Endothelial cell of umbilical vein (primary cell): ENCODE measurements at regions of chr4 and their contacts with region 1.

Region 1: DNA sequence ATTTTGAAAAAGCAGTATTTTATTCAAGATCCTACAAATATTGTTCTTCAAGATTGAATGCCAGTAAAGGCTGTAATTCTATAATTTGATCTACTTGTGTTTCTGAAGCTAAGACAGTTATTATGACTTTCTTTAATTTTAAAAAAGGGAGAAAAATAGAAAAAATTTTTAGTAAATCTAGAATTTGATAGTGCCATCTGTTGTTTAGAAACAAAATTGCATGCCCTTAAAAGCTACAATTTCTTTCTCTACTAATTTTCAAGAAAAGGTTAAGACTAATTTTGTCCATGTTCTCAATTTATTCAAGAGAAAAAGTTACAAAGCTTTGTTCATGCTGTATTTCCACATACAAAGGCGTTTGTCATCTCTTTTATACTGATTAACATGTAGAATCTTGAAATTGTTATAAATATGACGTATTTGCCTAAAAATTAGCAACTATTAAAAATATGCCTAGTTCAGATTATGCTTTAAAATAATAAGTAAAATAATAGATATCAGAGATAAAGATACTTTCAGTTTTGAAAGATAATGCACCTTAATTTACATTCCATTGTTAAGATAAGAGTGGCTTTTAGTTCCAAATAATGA is 25.6 kb upstream of the MMRN1 start:
- DNase-seq: peak; percentile 31
- H3K4me3 ChIP-seq: no peak overlapping the region
- H3K27ac ChIP-seq: no peak overlapping the region
- H3K4me1 ChIP-seq: no peaks in the 10 kb centered on the region
- H3K27me3 ChIP-seq: no peaks in the 10 kb centered on the region
- CTCF ChIP-seq: peak in 1 of 2 donors; percentile 30
- POLR2A ChIP-seq: no peak

Region 2: GRCh38 chr4:89586864-89587263 is 282.2 kb before region 1 on chr4:
- CTCF ChIA-PET with region 1: interaction called, 14 read pairs
- POLR2A ChIA-PET with region 1: no interaction called
- dilution Hi-C with region 1: no loop called
- intact Hi-C with region 1: no loop called
- DNase-seq: peak; percentile 45
- H3K4me3 ChIP-seq: no peak overlapping the region
- H3K27ac ChIP-seq: no peak overlapping the region
- H3K4me1 ChIP-seq: no peaks in the 10 kb centered on the region
- H3K27me3 ChIP-seq: no peaks in the 10 kb centered on the region
- CTCF ChIP-seq: no peak
- POLR2A ChIP-seq: no peak

Region 3: DNA sequence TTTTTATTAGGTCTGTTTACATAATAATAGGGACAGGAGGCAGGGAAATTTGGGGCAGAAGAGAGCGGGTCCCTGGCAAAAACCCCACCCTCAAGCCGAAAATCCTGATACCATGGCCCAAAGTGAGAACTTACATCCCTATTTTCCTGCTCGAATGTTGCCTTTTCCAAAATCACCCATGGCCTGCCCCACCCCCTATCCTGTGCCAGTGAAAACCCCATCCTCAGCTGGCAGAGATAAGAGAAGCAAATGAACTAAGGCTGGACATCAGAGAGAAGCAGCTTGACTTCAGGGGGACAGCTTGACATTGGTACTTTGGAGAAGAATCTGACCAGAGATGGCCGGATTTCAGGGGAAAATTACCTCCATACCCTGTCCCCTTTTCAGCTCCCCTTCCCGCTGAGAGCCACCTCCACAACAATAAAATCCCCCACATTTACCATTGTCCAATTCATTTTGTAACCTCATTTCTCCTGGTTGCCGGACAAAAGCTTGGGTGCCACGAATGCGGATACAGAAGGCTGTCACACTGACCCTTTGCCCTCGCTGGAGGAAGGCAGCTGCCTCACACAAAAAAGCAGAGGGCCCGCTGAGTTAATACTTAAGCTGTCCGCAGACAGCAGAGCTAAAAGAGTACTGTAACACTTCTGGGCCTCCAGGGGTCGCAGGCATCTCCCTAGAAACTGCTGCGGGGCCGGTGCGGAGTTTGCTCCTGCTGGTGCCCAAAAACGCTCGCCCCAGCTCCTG is 228.3 kb before region 1 on chr4:
- CTCF ChIA-PET with region 1: interaction called, 18 read pairs
- POLR2A ChIA-PET with region 1: no interaction called
- dilution Hi-C with region 1: no loop called
- intact Hi-C with region 1: no loop called
- DNase-seq: no peak
- H3K4me3 ChIP-seq: no peak overlapping the region
- H3K27ac ChIP-seq: no peak overlapping the region
- H3K4me1 ChIP-seq: no peaks in the 10 kb centered on the region
- H3K27me3 ChIP-seq: no peaks in the 10 kb centered on the region
- CTCF ChIP-seq: peak; percentile 56 to 68
- POLR2A ChIP-seq: no peak

Region 4: DNA sequence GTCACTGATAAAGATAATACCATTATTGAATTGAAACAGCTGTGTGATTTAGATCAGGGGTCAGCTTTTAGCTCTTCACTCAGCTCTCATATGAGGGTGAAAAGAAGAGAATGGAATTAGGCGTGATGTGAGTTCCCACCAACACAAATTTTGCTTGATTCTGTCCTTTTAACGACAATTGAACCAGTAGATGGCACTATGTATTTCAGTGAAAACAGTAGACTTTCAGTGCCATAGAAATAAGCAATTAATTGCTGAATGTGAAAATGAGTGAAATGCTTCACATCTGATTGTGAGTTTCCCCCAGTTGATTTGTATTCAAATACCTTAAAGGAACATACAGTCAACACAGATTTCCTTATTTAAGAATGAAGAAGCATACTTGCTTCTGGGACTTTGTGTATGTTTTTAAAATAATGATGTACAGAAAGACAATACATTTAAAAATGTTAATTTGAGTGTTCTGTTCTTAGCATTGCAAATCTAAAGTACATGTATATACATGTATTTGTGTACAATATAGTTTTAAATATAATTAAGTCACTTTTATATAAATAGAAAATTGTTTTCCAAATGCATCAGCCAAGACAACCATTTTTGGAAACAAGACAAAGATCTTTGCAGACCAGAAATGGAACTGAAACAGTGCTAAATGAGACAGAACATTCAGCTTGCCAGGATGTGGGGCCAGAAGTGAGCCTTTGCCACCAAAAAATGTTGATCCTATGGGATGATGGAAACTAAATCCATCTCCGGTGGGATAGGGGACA is 211.0 kb before region 1 on chr4:
- CTCF ChIA-PET with region 1: interaction called, 45 read pairs
- POLR2A ChIA-PET with region 1: no interaction called
- dilution Hi-C with region 1: no loop called
- intact Hi-C with region 1: loop called (anchors 1 kb)
- DNase-seq: peak; percentile 82
- H3K4me3 ChIP-seq: no peak overlapping the region
- H3K27ac ChIP-seq: no peak overlapping the region
- H3K4me1 ChIP-seq: peaks cover 9% of the 10 kb centered on the region
- H3K27me3 ChIP-seq: no peaks in the 10 kb centered on the region
- CTCF ChIP-seq: peak; percentile 29 to 34
- POLR2A ChIP-seq: no peak

Region 5: DNA sequence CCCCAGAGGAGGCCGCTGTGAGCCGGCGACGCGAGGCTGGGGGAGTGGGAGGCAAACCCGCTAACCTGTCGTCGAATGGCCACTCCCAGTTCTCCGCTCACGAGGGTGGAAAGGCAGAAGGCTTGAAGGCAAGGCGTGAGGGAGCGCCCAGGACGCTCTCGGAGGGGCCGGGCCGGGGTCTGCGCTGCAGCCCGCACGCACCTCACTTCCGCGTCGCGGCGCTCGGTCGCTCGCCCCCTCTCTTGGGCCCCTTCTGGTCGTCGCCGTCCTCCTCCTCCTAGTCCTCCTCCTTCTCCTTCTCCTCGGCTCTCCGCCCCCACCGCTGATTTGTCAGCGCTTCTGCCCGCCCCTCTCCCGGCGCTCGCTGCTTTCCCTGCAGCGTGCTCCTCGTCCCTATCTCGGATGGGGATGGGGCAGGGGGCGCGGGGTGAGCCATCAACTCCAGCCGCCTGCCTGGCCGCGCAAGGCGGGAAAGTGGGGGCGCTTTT is 32.2 kb before region 1 on chr4 and contains the start of gene SNCA:
- CTCF ChIA-PET with region 1: interaction called, 15 read pairs
- POLR2A ChIA-PET with region 1: no interaction called
- dilution Hi-C with region 1: no loop called
- intact Hi-C with region 1: no loop called
- DNase-seq: peak; percentile 89
- H3K4me3 ChIP-seq: peak within 1 kb of the TSS; percentile 56 to 93 (median 91)
- H3K27ac ChIP-seq: peak within 1 kb of the TSS; percentile 62
- H3K4me1 ChIP-seq: peaks cover 21% of the 10 kb centered on the region
- H3K27me3 ChIP-seq: no peaks in the 10 kb centered on the region
- CTCF ChIP-seq: no peak
- POLR2A ChIP-seq: peak; percentile 78
- total RNA-seq, gene SNCA: 116 and 124 TPM in 2 replicates

Region 6: GRCh38 chr4:89847571-89848325 is 21.3 kb before region 1 on chr4:
- CTCF ChIA-PET with region 1: interaction called, 23 read pairs
- POLR2A ChIA-PET with region 1: no interaction called
- dilution Hi-C with region 1: no loop called
- intact Hi-C with region 1: no loop called
- DNase-seq: peak; percentile 52
- H3K4me3 ChIP-seq: no peak overlapping the region
- H3K27ac ChIP-seq: no peak overlapping the region
- H3K4me1 ChIP-seq: no peaks in the 10 kb centered on the region
- H3K27me3 ChIP-seq: no peaks in the 10 kb centered on the region
- CTCF ChIP-seq: no peak
- POLR2A ChIP-seq: no peak

Region 7: DNA sequence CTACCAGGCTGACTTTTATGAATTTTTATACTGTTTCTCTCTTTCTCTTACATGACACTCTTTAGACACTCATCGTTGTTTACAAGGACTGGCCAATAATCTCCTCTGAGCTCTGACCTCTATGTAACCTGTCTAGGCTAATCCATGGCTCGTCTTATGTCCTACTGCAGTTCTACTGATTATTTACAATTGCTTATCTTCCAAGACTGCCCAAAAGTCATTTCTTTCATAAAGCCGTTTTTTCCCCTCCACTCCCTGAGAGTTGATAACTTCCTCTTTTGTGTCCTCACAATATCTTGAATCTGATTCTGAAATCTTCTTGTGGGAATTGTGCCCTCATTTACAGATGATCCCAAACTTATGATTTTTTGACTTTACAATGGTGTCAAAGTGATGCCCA is 13.9 kb before region 1 on chr4:
- CTCF ChIA-PET with region 1: interaction called, 23 read pairs
- POLR2A ChIA-PET with region 1: no interaction called
- dilution Hi-C with region 1: no loop called
- intact Hi-C with region 1: no loop called
- DNase-seq: no peak
- H3K4me3 ChIP-seq: no peak overlapping the region
- H3K27ac ChIP-seq: no peak overlapping the region
- H3K4me1 ChIP-seq: no peaks in the 10 kb centered on the region
- H3K27me3 ChIP-seq: no peaks in the 10 kb centered on the region
- CTCF ChIP-seq: no peak
- POLR2A ChIP-seq: no peak